Common myeloid progenitor, CD34-positive (primary cell): ENCODE measurements at regions of chr2 and their contacts with region 1.

Region 1: GRCh38 chr2:30115141-30115980 is 31.4 kb upstream of the YPEL5 start:
- DNase-seq: peak; percentile 64 to 74 (median 65)
- H3K4me3 ChIP-seq: no peak overlapping the region
- H3K27ac ChIP-seq: no peak overlapping the region
- H3K4me1 ChIP-seq: peaks cover 0 to 18% (median 8%) of the 10 kb centered on the region in 4 experiments
- H3K27me3 ChIP-seq: no peaks in the 10 kb centered on the region

Region 2: GRCh38 chr2:29936020-29936419 is 179.3 kb before region 1 on chr2:
- CTCF ChIA-PET with region 1: no interaction called
- POLR2A ChIA-PET with region 1: no interaction called
- DNase-seq: no peak
- H3K4me3 ChIP-seq: no peak overlapping the region
- H3K27ac ChIP-seq: no peak overlapping the region
- H3K4me1 ChIP-seq: no peaks in the 10 kb centered on the region
- H3K27me3 ChIP-seq: peaks cover 0 to 4% (median 2%) of the 10 kb centered on the region in 5 experiments

Region 3: DNA sequence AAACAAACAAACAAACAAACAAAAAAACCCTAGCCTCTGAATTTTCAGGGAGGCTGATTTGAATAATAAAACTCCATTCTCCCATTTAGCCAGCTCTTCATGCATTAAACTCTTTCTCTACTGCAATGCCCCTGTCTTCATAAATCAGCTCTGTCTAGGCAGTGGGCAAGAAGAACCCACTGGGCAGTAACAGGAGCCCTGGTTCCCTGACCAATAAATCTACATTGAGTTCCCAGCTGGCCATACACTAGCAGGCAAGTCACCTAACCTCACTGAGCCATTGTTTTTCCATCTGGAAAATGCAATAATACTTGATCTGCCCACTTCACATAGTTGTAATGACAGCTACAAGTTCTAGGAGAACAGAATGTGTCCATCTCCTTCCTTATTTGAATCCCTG is 26.2 kb before region 1 on chr2:
- CTCF ChIA-PET with region 1: interaction called, 85 read pairs
- POLR2A ChIA-PET with region 1: interaction called, 4 read pairs
- DNase-seq: no peak
- H3K4me3 ChIP-seq: no peak overlapping the region
- H3K27ac ChIP-seq: no peak overlapping the region
- H3K4me1 ChIP-seq: no peaks in the 10 kb centered on the region
- H3K27me3 ChIP-seq: peaks cover 0 to 21% (median 9%) of the 10 kb centered on the region in 5 experiments

Region 4: GRCh38 chr2:30098266-30099005 is 16.9 kb before region 1 on chr2:
- CTCF ChIA-PET with region 1: interaction called, 14 read pairs
- POLR2A ChIA-PET with region 1: no interaction called
- DNase-seq: no peak
- H3K4me3 ChIP-seq: no peak overlapping the region
- H3K27ac ChIP-seq: no peak overlapping the region
- H3K4me1 ChIP-seq: no peaks in the 10 kb centered on the region
- H3K27me3 ChIP-seq: peaks cover 0 to 6% (median 2%) of the 10 kb centered on the region in 5 experiments

Region 5: DNA sequence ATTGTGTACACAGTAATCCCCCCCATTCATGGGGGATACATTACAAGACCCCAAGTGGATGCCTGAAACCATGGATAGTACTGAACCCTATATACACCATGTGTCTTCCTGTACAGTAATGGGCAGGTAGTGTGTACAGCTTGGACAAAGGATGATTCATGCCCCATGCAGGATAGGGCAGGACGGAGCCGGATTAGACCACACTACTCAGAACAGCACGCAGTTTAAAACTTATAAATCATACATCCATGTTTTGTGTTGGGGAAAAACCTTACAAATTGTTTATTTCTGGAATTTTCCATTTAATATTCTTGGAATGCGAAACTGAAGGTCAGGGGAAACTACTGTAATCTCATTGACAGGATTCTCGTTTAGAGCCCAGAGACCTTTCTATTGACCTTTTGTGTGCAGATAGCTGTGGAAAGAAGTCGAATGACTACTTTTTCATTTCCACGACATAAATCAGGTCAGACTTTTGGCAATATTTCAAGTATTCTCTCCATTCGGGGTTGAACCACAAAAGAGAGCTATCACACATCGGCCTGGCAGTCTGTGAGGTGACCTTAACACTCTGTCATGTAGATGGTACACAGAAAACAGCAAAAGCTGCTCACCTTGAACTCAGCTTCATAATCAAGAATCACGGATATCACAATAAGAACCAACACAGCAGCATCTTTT is 21.5 kb after region 1 on chr2:
- CTCF ChIA-PET with region 1: interaction called, 15 read pairs
- POLR2A ChIA-PET with region 1: interaction called, 3 read pairs
- DNase-seq: no peak
- H3K4me3 ChIP-seq: no peak overlapping the region
- H3K27ac ChIP-seq: no peak overlapping the region
- H3K4me1 ChIP-seq: peaks cover 0 to 3% (median 1%) of the 10 kb centered on the region in 4 experiments
- H3K27me3 ChIP-seq: no peaks in the 10 kb centered on the region

Region 6: DNA sequence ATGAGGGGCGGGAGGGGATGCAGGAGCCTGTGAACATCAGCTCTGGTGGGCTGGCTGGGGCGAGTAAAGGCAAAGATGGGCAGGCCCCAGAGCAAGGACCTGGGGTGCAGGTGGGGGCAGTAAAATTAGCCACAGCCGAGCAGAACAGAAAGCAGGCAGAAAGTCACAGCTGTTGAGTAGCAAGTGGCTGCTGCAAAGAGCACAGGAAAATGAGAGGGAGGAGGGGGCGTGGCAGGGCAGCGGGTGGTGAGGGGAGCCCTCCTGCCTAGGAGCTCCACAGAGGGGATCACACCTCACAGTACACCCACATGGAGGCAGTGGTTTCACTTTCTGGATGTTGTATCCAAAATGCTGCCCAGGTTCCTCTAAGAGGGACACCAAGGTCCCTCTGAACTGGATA is 195.6 kb after region 1 on chr2:
- CTCF ChIA-PET with region 1: no interaction called
- POLR2A ChIA-PET with region 1: no interaction called
- DNase-seq: no peak
- H3K4me3 ChIP-seq: no peak overlapping the region
- H3K27ac ChIP-seq: no peak overlapping the region
- H3K4me1 ChIP-seq: no peaks in the 10 kb centered on the region
- H3K27me3 ChIP-seq: no peaks in the 10 kb centered on the region